CD4-positive, alpha-beta memory T cell (primary cell): ENCODE measurements at regions of chrX and their contacts with region 1.

Region 1: DNA sequence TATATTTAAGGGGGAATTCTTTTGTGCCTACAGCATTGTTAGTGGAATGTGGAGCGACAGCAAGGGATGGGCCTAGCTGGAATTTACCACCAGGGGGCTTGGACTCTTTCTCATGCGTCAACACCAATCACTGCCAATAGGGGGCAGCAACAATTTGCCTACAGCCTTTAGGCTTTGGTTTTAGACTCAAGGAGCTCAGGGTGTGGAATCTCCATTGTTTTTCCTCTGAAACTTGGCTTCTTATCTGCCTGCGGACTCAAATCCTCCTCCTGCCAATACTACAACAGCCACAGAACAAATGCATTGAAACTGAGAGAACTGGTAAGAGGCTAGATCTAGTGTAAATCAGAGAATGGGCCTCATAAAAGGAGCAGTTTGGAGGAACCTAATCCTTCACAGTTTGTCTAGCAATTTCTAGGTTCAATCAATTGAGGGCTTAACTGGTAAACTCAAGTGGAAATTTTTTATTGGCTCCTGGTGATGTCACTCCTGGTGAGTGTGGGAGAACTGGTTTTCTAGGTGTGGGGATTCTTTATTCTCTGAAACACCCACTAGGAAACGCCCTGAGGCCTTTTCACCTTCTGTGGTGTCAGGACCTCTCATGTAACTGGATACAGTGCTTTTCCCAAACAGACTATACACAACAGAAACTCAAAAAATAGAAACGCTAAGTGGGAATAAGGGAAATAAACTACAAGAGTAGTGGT is 27.9 kb upstream of the TMSB4X start:
- DNase-seq: peak; percentile 69 to 85 (median 79)
- H3K4me3 ChIP-seq: no peak overlapping the region
- H3K4me3 Mint-ChIP-seq: peak overlapping the region in 7 of 8 donors; percentile 41 to 76 (median 64)
- H3K27ac ChIP-seq: peak overlapping the region; percentile 84
- H3K27ac Mint-ChIP-seq: peak overlapping the region; percentile 91 to 99 (median 97)
- H3K4me1 ChIP-seq: peaks cover 49% of the 10 kb centered on the region
- H3K4me1 Mint-ChIP-seq: peaks cover 37 to 58% (median 50%) of the 10 kb centered on the region in 4 donors
- H3K27me3 ChIP-seq: no peaks in the 10 kb centered on the region
- H3K27me3 Mint-ChIP-seq: no peaks in the 10 kb centered on the region

Region 2: GRCh38 chrX:12984629-12985319 is 37.8 kb after region 1 on chrX:
- CTCF ChIA-PET with region 1: interaction called, 7 read pairs
- POLR2A ChIA-PET with region 1: interaction called, 1,441 read pairs
- intact Hi-C with region 1: no loop called
- DNase-seq: peak; percentile 62 to 74 (median 72)
- H3K4me3 ChIP-seq: peak overlapping the region in 1 of 2 donors; percentile 34
- H3K4me3 Mint-ChIP-seq: peak overlapping the region; percentile 59 to 87 (median 70)
- H3K27ac ChIP-seq: peak overlapping the region; percentile 50
- H3K27ac Mint-ChIP-seq: peak overlapping the region; percentile 94 to 100 (median 97)
- H3K4me1 ChIP-seq: peaks cover 81% of the 10 kb centered on the region
- H3K4me1 Mint-ChIP-seq: peaks cover 45 to 75% (median 61%) of the 10 kb centered on the region in 4 donors
- H3K27me3 ChIP-seq: no peaks in the 10 kb centered on the region
- H3K27me3 Mint-ChIP-seq: no peaks in the 10 kb centered on the region

Region 3: DNA sequence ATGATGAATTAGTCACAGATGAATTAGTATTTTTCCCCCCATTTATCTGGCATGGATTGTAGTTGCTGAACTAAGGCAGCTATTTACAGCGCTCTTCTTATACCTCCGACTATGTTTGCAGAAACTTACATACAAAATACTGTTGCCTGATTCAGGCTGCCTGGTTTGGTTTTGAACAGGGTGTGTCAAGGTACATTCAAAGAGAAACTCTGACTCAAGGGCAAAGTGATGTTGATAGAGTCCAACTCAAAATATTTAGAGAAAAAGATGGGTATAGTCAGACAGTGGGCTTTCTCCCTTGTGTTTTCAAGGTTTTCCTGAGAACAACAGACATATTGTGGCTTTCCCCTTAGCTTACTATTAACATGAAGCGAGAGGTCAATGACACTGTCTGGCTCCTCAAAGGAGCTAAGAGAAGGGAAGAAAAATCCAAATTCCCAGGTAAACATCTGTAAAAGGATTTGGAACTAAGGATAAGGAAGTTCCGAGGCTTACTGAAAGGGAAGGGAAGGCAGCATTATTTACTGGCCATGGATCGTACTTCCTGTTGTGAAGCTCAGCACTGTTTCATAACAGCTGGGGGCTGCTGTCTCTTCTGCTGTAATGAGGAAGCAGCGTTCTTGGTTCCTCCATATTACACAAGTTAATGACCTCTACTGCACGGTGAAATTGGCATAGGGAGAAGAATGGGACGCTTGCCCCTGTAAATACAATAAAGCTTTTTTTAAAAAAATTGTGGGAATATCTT is 66.5 kb after region 1 on chrX:
- CTCF ChIA-PET with region 1: interaction called, 14 read pairs
- POLR2A ChIA-PET with region 1: interaction called, 23 read pairs
- intact Hi-C with region 1: no loop called
- DNase-seq: peak in 2 of 5 donors; percentile 19 to 23
- H3K4me3 ChIP-seq: no peak overlapping the region
- H3K4me3 Mint-ChIP-seq: peak overlapping the region; percentile 6 to 44 (median 20)
- H3K27ac ChIP-seq: peak overlapping the region; percentile 61
- H3K27ac Mint-ChIP-seq: peak overlapping the region; percentile 56 to 93 (median 80)
- H3K4me1 ChIP-seq: peaks cover 56% of the 10 kb centered on the region
- H3K4me1 Mint-ChIP-seq: peaks cover 36 to 72% (median 53%) of the 10 kb centered on the region in 4 donors
- H3K27me3 ChIP-seq: no peaks in the 10 kb centered on the region
- H3K27me3 Mint-ChIP-seq: no peaks in the 10 kb centered on the region

Region 4: DNA sequence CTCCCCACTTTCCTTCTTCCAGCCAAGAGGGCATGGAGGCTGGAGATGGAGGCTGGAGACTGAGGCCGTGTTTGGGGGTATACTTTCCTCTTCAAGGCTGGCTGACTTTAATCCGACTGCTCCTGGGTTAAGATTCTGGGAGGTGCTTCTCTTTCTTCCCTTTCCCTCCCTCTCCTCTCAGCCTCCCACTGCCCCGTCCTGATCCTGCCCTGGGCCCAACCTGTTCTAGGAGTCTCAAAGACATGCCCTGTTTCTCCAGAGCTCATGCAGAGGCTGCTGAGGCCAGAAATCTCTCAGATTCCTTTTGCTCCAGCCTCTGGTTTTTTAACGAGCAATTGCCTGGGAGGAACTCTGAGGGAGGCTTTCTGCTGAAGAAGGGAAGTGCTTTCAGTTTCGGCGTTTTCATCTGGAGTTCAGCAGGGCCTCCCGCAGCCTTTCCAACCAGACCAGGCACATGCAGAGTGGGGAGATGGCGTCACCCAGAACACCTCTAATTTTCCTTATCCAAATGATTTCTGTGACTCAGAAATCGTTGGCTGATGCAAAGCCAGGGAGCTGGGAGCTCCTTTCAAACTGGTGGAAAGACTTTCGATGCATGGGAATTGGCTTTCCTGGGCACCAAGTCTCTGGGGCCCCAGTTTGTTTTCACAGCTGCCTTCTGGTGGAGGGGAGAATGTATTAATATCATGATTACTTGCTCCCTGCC is 131.9 kb after region 1 on chrX:
- CTCF ChIA-PET with region 1: interaction called, 17 read pairs
- POLR2A ChIA-PET with region 1: interaction called, 18 read pairs
- intact Hi-C with region 1: no loop called
- DNase-seq: no peak
- H3K4me3 ChIP-seq: peak overlapping the region in 1 of 2 donors; percentile 27
- H3K4me3 Mint-ChIP-seq: peak overlapping the region; percentile 33 to 81 (median 66)
- H3K27ac ChIP-seq: peak overlapping the region; percentile 62
- H3K27ac Mint-ChIP-seq: peak overlapping the region; percentile 84 to 95 (median 93)
- H3K4me1 ChIP-seq: peaks cover 100% of the 10 kb centered on the region
- H3K4me1 Mint-ChIP-seq: peaks cover 57 to 96% (median 77%) of the 10 kb centered on the region in 4 donors
- H3K27me3 ChIP-seq: no peaks in the 10 kb centered on the region
- H3K27me3 Mint-ChIP-seq: no peaks in the 10 kb centered on the region

Region 5: DNA sequence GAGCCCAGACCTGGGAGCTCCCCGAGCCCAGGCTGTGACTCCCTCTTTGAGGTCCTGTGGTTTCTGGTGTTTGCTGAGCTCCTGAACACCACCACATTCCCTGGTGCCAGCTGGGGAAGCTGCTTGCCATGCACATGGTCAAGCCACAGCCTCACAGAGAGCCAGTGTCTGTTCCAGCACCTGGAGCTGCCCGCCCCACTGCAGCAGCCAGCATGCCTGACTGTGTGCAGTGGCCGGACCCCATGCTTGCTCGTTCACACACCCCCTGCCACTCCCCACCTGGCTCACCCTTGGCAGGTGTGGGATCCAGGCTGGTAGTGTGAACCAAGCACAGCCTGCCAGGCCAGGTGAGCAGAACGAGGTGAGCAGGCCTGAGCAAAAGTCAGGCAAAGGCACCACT is 193.0 kb after region 1 on chrX:
- CTCF ChIA-PET with region 1: interaction called, 13 read pairs
- POLR2A ChIA-PET with region 1: no interaction called
- intact Hi-C with region 1: no loop called
- DNase-seq: no peak
- H3K4me3 ChIP-seq: no peak overlapping the region
- H3K4me3 Mint-ChIP-seq: no peak overlapping the region
- H3K27ac ChIP-seq: no peak overlapping the region
- H3K27ac Mint-ChIP-seq: no peak overlapping the region
- H3K4me1 ChIP-seq: no peaks in the 10 kb centered on the region
- H3K4me1 Mint-ChIP-seq: peaks cover 0 to 3% (median under 1%) of the 10 kb centered on the region in 4 donors
- H3K27me3 ChIP-seq: no peaks in the 10 kb centered on the region
- H3K27me3 Mint-ChIP-seq: no peaks in the 10 kb centered on the region

Region 6: DNA sequence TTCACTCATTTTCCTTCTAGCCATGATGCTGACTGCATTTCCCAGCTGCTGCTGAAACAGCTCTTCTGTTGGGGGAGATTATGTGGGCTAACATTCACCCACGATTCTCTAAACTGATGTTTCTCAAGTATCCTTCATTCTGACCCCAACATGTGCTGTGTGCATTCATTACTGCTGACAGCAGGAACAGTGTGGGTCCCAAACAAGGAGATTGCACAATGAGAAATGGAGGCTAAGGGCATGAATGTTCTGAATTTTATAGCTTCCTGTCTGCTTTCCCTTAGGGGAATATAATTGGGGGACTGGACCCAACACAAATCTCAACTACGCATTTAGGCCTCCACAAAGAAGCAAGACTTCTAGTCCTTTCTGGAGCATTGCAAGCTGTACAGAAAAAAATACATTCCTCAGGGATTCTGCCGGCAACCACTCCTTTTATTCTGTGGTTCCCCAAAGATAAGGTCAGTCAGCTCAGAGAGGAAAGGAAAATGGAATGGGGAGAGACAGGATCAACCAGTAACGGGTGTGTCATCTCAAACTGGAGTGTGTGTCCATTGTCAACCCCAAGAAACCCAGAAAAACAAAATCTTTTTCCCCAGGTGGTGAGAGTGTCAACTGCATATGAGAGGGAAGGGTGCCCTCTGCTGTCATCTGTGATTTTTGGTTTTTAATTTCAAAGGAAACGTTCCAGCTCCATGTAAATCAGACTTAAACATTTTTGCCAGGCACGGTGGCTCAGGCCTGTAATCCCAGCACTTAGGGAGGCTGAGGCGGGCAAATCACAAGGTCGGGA is 540.9 kb after region 1 on chrX:
- CTCF ChIA-PET with region 1: interaction called, 161 read pairs
- POLR2A ChIA-PET with region 1: interaction called, 36 read pairs
- intact Hi-C with region 1: loop called (anchors 1 kb)
- DNase-seq: peak; percentile 45 to 65 (median 58)
- H3K4me3 ChIP-seq: no peak overlapping the region
- H3K4me3 Mint-ChIP-seq: peak overlapping the region in 2 of 8 donors; percentile 38 to 58
- H3K27ac ChIP-seq: no peak overlapping the region
- H3K27ac Mint-ChIP-seq: peak overlapping the region; percentile 57 to 89 (median 70)
- H3K4me1 ChIP-seq: peaks cover 12% of the 10 kb centered on the region
- H3K4me1 Mint-ChIP-seq: peaks cover 7 to 15% (median 13%) of the 10 kb centered on the region in 4 donors
- H3K27me3 ChIP-seq: no peaks in the 10 kb centered on the region
- H3K27me3 Mint-ChIP-seq: no peaks in the 10 kb centered on the region

Region 7: DNA sequence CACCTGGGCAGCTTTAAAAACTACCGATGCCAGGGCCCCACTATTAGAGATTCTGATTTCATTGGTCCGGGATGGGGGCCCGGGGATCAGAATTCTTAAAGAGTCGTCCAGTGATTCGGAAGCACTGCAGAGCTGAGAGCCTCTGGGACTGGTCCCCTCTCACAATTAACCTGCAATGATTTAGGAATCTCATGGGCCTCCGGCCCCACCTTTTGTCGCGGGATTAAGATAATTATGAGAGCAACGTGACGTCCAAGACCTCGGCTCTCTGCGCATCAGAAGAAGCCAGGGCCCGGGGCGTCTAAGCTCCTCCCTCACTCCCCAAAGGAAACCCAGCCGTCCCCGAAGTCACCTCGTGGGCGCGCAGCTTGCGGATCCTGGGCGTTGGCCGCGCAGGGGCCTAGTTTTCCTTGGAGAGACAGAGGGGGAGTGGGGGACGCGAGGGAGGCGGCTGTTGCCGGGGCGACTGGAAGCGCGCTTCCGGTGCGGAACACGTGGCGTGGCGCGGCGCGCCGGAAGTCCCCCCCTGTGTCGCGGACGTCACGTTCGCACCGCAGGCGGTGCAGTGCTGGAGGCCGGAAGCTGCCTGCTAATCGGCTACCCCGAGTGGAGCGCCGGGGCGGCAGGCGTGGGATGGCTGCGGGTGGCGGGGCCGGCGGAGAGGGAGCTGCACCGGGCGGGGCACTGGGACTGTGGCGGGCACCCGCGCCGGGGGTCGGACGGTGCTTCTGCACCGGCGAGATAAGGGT is 1082.6 kb after region 1 on chrX and contains the start of gene GEMIN8:
- CTCF ChIA-PET with region 1: interaction called, 4 read pairs
- POLR2A ChIA-PET with region 1: no interaction called
- intact Hi-C with region 1: loop called (anchors 5 kb)
- DNase-seq: peak; percentile 89 to 93 (median 92)
- H3K4me3 ChIP-seq: peak within 1 kb of the TSS; percentile 54 to 75
- H3K4me3 Mint-ChIP-seq: peak within 1 kb of the TSS; percentile 90 to 98 (median 96)
- H3K27ac ChIP-seq: peak within 1 kb of the TSS; percentile 88
- H3K27ac Mint-ChIP-seq: peak within 1 kb of the TSS; percentile 92 to 99 (median 98)
- H3K4me1 ChIP-seq: peaks cover 49% of the 10 kb centered on the region
- H3K4me1 Mint-ChIP-seq: peaks cover 22 to 50% (median 38%) of the 10 kb centered on the region in 4 donors
- H3K27me3 ChIP-seq: no peaks in the 10 kb centered on the region
- H3K27me3 Mint-ChIP-seq: no peaks in the 10 kb centered on the region
- total RNA-seq, gene GEMIN8: 10.8 to 12.3 TPM